GM12878 (cell line): ENCODE measurements at regions of chr3 and their contacts with region 1.

Region 1: GRCh38 chr3:182618085-182618732 is 175.1 kb upstream of the ATP11B start:
- DNase-seq: no peak
- ATAC-seq: peak; percentile 76
- H3K4me3 ChIP-seq: no peak overlapping the region
- H3K27ac ChIP-seq: no peak overlapping the region
- H3K4me1 ChIP-seq: no peaks in the 10 kb centered on the region
- H3K27me3 ChIP-seq: no peaks in the 10 kb centered on the region; a peak in 1 of 4 replicates
- CTCF ChIP-seq: peak; percentile 57 to 75 (median 65)
- EP300 ChIP-seq: no peak
- POLR2A ChIP-seq: no peak
- RAD21 ChIP-seq: peak; percentile 89

Region 2: GRCh38 chr3:182241766-182242488 is 376.3 kb before region 1 on chr3:
- CTCF ChIA-PET with region 1: interaction called, 3 read pairs
- POLR2A ChIA-PET with region 1: no interaction called
- RAD21 ChIA-PET with region 1: no interaction called
- SMC1A ChIA-PET with region 1: no interaction called
- in situ Hi-C with region 1: no loop called
- intact Hi-C with region 1: loop called (anchors 10 kb)
- DNase-seq: no peak
- ATAC-seq: no peak
- H3K4me3 ChIP-seq: no peak overlapping the region
- H3K27ac ChIP-seq: no peak overlapping the region
- H3K4me1 ChIP-seq: no peaks in the 10 kb centered on the region
- H3K27me3 ChIP-seq: peaks cover 0 to 2% of the 10 kb centered on the region in 2 experiments; a peak in 1 of 4 replicates
- CTCF ChIP-seq: no peak
- EP300 ChIP-seq: no peak
- POLR2A ChIP-seq: no peak
- RAD21 ChIP-seq: no peak

Region 3: DNA sequence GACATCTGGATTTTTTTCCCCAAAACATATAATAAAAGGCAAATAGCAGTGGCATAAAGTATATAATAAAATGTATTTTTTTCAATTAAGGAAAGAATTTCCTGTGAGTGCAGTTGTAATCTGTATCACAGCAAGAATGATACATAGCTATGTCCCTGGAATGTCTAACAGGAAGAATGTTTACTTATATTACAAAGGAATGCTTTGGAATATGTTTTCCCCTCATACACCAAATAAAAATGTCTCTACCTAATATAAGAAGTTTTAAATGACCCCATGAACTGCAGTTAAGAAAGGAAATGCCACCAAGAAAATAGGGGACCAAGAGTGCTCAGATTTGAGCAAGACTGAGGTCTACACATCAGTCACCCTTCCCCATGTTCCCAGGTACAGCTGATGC is 137.1 kb after region 1 on chr3:
- CTCF ChIA-PET with region 1: no interaction called
- POLR2A ChIA-PET with region 1: no interaction called
- RAD21 ChIA-PET with region 1: no interaction called
- SMC1A ChIA-PET with region 1: no interaction called
- in situ Hi-C with region 1: no loop called
- intact Hi-C with region 1: no loop called
- DNase-seq: no peak
- ATAC-seq: no peak
- H3K4me3 ChIP-seq: no peak overlapping the region
- H3K27ac ChIP-seq: no peak overlapping the region
- H3K4me1 ChIP-seq: no peaks in the 10 kb centered on the region
- H3K27me3 ChIP-seq: peaks cover 0 to 2% of the 10 kb centered on the region in 2 experiments; a peak in 1 of 4 replicates
- CTCF ChIP-seq: no peak
- EP300 ChIP-seq: no peak
- POLR2A ChIP-seq: no peak
- RAD21 ChIP-seq: no peak

Region 4: GRCh38 chr3:183710231-183710630 is 1092.0 kb after region 1 on chr3:
- CTCF ChIA-PET with region 1: no interaction called
- POLR2A ChIA-PET with region 1: no interaction called
- RAD21 ChIA-PET with region 1: no interaction called
- SMC1A ChIA-PET with region 1: no interaction called
- in situ Hi-C with region 1: no loop called
- intact Hi-C with region 1: no loop called
- DNase-seq: no peak
- ATAC-seq: no peak
- H3K4me3 ChIP-seq: no peak overlapping the region
- H3K27ac ChIP-seq: no peak overlapping the region
- H3K4me1 ChIP-seq: no peaks in the 10 kb centered on the region
- H3K27me3 ChIP-seq: no peaks in the 10 kb centered on the region
- CTCF ChIP-seq: no peak
- EP300 ChIP-seq: no peak
- POLR2A ChIP-seq: no peak
- RAD21 ChIP-seq: no peak